ENCODE measurements at regions of chr6 and their contacts with region 1.

Region 1: DNA sequence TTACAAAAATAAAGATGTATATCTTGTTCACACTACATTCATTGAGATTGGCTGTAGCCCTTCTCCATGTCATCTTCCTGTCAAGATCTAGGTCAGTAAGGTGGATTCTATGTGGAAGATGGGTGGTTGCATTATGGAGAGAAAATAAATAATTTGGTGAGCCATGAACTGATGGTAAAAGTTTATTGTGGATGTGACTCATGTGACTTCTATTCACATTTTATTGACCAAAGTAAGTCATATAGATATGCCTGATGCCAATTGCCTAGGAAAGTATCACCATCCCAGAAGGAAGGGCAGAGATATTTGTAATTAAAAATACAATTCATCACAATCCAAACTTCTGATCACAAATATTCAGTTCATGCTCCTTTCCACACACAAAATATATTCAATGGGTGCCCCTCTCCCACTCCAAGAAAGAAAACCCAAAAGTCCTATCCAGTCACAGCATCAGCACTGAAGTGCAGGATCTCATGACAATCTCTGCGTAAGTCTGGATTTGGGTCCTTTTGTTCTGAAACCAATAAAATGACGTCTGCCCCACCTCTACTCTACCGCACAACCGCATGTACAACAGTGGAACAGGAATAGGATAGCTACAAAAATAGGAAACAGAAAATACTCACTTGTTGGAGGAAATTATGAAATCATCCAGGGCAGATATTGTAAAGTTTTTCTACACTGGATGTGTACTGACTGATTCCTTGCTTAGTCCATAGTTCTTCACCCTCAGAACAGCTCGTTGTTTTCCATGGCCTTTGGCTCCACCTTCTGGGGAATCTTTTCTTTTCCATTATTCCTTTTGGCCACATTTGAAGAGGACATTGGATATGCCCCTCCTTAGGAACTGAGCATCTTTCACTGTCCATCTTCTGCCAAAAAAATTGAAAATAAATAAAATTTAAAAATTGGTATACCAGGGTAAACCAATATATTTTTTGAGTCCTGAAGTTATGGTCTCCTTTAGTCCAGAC is 16.1 kb upstream of the SLC17A3 start:
- DNase-seq: peak; percentile 70
- ATAC-seq: peak; percentile 95
- H3K4me3 ChIP-seq: no peak overlapping the region
- H3K27ac ChIP-seq: no peak overlapping the region
- H3K4me1 ChIP-seq: peaks cover 14% of the 10 kb centered on the region
- H3K27me3 ChIP-seq: no peaks in the 10 kb centered on the region
- CTCF ChIP-seq: peak; percentile 91
- EP300 ChIP-seq: no peak
- POLR2A ChIP-seq: no peak
- RAD21 ChIP-seq: peak; percentile 90

Region 2: DNA sequence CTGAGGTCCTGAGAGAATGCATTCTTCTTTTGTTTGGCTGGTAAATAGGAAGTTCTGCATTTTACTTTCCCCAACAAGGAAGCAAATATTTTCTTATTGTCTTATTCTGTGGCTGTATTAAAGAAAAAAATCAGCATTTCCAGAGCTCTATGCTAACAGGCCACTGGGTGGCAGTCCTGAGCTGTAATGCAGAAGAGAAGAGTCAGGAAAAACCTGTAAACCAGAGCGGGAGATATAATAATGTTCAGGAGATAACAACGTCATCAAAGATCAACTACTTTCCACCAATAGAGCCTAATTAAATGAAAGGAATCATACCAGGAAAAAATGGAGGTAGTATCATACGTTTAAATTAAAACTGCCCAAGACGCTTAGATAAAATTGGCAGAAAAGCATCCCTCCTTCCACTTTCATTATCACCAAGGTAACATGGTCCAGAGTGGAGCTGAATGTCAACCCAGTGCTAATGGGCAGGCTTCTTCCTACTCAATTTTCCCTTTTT is 666.6 kb before region 1 on chr6:
- CTCF ChIA-PET with region 1: interaction called, 6 read pairs
- POLR2A ChIA-PET with region 1: no interaction called
- in situ Hi-C with region 1: no loop called
- intact Hi-C with region 1: loop called (anchors 1 kb)
- DNase-seq: peak; percentile 54
- ATAC-seq: peak; percentile 73
- H3K4me3 ChIP-seq: no peak overlapping the region
- H3K27ac ChIP-seq: no peak overlapping the region
- H3K4me1 ChIP-seq: no peaks in the 10 kb centered on the region
- H3K27me3 ChIP-seq: 0 out of 5 replicates have a peak, but pooled peaks cover 0 to 4% of the 10 kb centered on the region in 2 experiments
- CTCF ChIP-seq: peak; percentile 84
- EP300 ChIP-seq: no peak
- POLR2A ChIP-seq: no peak
- RAD21 ChIP-seq: peak; percentile 57; the same call in 1 of the 2 replicates

Region 3: DNA sequence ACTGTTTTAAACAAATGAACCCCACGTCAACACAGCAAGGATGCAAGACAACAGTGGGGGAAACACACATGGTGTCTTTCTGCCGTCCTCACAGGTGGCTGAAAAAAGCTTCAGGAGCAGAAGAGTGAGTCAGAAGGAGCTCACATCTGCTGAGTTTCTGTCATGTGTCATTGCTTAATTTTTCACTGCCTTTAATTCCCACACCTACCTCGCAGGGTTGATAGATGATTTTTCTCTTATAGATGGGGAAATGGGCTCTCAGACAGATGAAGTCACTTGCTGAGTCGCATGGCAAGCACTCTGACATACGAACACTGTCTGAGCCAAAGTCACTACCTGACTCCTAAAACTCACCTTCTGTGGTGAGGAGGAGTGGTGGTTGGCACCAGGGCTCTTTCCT is 639.3 kb before region 1 on chr6:
- CTCF ChIA-PET with region 1: no interaction called
- POLR2A ChIA-PET with region 1: no interaction called
- in situ Hi-C with region 1: loop called (anchors 25 kb)
- intact Hi-C with region 1: no loop called
- DNase-seq: no peak
- ATAC-seq: no peak
- H3K4me3 ChIP-seq: no peak overlapping the region
- H3K27ac ChIP-seq: no peak overlapping the region
- H3K4me1 ChIP-seq: no peaks in the 10 kb centered on the region
- H3K27me3 ChIP-seq: no peaks in the 10 kb centered on the region
- CTCF ChIP-seq: no peak
- EP300 ChIP-seq: no peak
- POLR2A ChIP-seq: no peak
- RAD21 ChIP-seq: no peak

Region 4: DNA sequence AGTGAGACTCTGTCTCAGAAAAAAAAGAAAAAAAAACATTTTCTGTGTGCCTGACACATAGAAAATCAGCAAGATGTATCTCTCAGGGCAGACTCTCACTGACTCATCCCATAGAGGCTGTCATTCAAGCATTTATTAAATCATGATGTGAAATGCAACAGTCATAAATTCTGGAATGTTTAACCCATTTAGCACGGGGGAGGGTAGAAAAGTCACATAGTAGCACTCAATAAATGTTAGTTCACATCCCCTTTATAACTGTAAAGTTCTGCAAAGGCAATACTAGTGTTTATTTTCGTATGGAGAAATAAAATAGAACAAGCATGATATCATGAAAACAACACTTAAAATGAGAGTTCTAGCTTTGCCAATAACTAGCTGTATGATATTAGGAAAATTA is 626.5 kb before region 1 on chr6:
- CTCF ChIA-PET with region 1: interaction called, 3 read pairs
- POLR2A ChIA-PET with region 1: no interaction called
- in situ Hi-C with region 1: loop called (anchors 25 kb)
- intact Hi-C with region 1: loop called (anchors 5 kb)
- DNase-seq: no peak
- ATAC-seq: no peak
- H3K4me3 ChIP-seq: no peak overlapping the region
- H3K27ac ChIP-seq: no peak overlapping the region
- H3K4me1 ChIP-seq: no peaks in the 10 kb centered on the region
- H3K27me3 ChIP-seq: no peaks in the 10 kb centered on the region
- CTCF ChIP-seq: no peak
- EP300 ChIP-seq: no peak
- POLR2A ChIP-seq: no peak
- RAD21 ChIP-seq: no peak

Region 5: GRCh38 chr6:25788305-25788922 is 101.8 kb before region 1 on chr6:
- CTCF ChIA-PET with region 1: interaction called, 59 read pairs
- POLR2A ChIA-PET with region 1: no interaction called
- in situ Hi-C with region 1: loop called (anchors 5 kb)
- intact Hi-C with region 1: loop called (anchors 1 kb)
- DNase-seq: peak; percentile 72
- ATAC-seq: peak; percentile 99
- H3K4me3 ChIP-seq: no peak overlapping the region
- H3K27ac ChIP-seq: no peak overlapping the region
- H3K4me1 ChIP-seq: no peaks in the 10 kb centered on the region; the same call in 1 of the 2 replicates
- H3K27me3 ChIP-seq: no peaks in the 10 kb centered on the region
- CTCF ChIP-seq: peak; percentile 85
- EP300 ChIP-seq: no peak
- POLR2A ChIP-seq: no peak
- RAD21 ChIP-seq: peak; percentile 85

Region 6: GRCh38 chr6:25793970-25794369 is 96.2 kb before region 1 on chr6:
- CTCF ChIA-PET with region 1: interaction called, 59 read pairs
- POLR2A ChIA-PET with region 1: no interaction called
- in situ Hi-C with region 1: loop called (anchors 5 kb)
- intact Hi-C with region 1: no loop called
- DNase-seq: no peak
- ATAC-seq: no peak
- H3K4me3 ChIP-seq: no peak overlapping the region
- H3K27ac ChIP-seq: no peak overlapping the region
- H3K4me1 ChIP-seq: no peaks in the 10 kb centered on the region
- H3K27me3 ChIP-seq: no peaks in the 10 kb centered on the region
- CTCF ChIP-seq: no peak
- EP300 ChIP-seq: no peak
- POLR2A ChIP-seq: no peak
- RAD21 ChIP-seq: no peak

Region 7: DNA sequence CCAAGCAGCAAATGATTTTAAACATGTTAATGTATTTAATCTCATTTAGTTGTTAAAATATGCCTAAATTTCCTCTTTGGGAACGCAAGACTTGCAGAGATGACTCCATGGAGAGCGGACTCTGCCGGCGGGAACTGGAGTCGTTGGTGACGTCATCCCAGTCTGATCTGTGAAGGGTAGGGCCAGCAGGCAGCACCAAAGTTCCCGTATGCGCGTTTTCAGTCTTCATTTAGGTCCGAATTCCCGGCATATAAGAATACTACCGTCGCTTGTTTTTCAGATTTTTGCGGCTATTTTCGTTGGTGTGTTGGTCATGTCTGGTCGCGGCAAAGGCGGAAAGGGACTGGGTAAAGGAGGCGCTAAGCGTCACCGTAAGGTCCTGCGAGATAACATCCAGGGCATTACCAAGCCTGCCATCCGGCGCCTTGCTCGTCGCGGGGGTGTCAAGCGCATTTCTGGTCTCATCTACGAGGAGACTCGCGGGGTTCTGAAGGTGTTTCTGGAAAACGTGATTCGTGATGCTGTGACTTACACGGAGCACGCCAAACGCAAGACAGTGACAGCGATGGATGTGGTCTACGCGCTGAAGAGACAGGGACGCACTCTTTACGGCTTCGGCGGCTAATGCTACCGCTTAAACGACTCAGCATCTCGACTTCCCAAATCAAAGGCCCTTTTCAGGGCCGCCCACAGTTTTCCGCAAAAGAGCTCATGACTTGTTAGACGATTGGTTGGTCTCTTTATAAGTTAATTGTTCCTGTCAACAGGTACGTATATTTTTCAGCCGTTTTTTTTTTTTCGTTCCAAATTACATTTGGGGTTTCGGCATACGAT is 314.4 kb after region 1 on chr6:
- CTCF ChIA-PET with region 1: no interaction called
- POLR2A ChIA-PET with region 1: no interaction called
- in situ Hi-C with region 1: no loop called
- intact Hi-C with region 1: no loop called
- DNase-seq: peak; percentile 98
- ATAC-seq: peak; percentile 75
- H3K4me3 ChIP-seq: peak overlapping the region; percentile 62 to 95 (median 77)
- H3K27ac ChIP-seq: peak overlapping the region; percentile 87
- H3K4me1 ChIP-seq: peaks cover 36% of the 10 kb centered on the region
- H3K27me3 ChIP-seq: no peaks in the 10 kb centered on the region; a peak in 1 of 5 replicates
- CTCF ChIP-seq: peak; percentile 53
- EP300 ChIP-seq: peak in 1 of 2 experiments; percentile 89; a peak in 3 of 4 replicates
- POLR2A ChIP-seq: peak; percentile 98 to 99
- RAD21 ChIP-seq: no peak; the same call in 1 of the 2 replicates